ENCODE measurements at regions of chr17 and their contacts with region 1.

Region 1: GRCh38 chr17:75338335-75338734 is 49.1 kb upstream of the SLC25A19 start:
- DNase-seq: no peak
- H3K4me3 ChIP-seq: no peak overlapping the region
- H3K27ac ChIP-seq: peak overlapping the region; percentile 29
- H3K4me1 ChIP-seq: peaks cover 22% of the 10 kb centered on the region
- H3K27me3 ChIP-seq: no peaks in the 10 kb centered on the region
- CTCF ChIP-seq: no peak

Region 2: DNA sequence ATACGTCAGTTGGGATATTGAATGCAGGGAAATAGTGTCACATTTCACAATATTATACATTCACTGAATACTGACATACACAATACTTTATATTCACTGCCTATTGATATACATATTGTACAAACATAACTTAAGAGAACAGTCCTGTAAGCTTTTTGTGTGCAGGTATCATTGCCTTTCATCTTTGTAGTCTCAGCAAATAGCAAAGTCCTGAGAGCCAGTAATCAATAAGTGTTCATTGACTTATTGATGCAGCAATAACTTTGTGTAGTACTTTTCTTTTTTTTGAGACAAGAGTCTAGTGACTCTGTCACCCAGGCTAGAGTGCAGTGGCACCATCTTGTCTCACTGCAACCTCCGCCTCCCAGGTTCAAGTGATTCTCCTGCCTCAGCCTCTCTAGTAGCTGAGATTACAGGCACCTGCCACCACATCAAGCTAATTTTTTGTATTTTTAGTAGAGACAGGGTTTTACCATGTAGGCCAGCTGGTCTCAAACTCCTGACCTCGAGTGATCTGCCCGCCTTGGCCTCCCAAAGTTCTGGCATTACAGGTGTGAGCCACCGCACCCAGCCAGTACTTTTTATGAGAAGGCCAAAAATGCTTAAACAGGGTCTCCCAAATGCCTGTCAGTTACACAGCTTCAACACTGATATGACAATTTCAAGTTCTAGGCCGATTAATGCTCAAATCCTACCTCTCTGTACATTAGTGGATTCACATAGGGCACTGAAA is 138.3 kb before region 1 on chr17:
- CTCF ChIA-PET with region 1: no interaction called
- POLR2A ChIA-PET with region 1: interaction called, 13 read pairs
- intact Hi-C with region 1: no loop called
- DNase-seq: no peak
- H3K4me3 ChIP-seq: no peak overlapping the region
- H3K27ac ChIP-seq: no peak overlapping the region
- H3K4me1 ChIP-seq: peaks cover 4% of the 10 kb centered on the region
- H3K27me3 ChIP-seq: no peaks in the 10 kb centered on the region
- CTCF ChIP-seq: no peak